Esophagus muscularis mucosa (tissue), 4 donors: ENCODE measurements at regions of chr1 and their contacts with region 1.

Region 1: DNA sequence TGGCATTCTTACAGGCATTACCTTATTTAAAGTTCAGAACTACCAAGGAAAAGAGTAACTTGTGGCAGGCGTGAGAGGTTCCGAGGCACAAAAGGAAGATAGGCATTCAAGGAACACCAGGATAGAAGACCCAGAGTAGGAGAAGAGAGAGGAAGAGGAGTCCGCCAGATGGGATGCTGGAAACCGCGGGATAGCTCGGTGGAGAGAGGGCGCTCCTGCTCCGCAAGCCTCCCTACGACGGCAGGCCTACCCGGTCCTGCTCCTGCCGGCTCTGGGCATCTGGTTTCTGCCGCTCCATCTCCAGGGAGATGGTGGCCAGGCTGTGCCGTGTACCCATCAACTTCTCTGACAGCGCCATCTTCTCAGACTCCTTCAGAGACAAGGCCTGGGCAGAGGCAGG is 5.4 kb upstream of the NBPF1 start:
- DNase-seq: no peak
- H3K4me3 ChIP-seq: no peak overlapping the region
- H3K27ac ChIP-seq: no peak overlapping the region
- H3K4me1 ChIP-seq: peaks cover 3 to 16% (median 9%) of the 10 kb centered on the region in 4 donors
- H3K27me3 ChIP-seq: no peaks in the 10 kb centered on the region
- CTCF ChIP-seq: no peak
- EP300 ChIP-seq: no peak
- POLR2A ChIP-seq: no peak

Region 2: GRCh38 chr1:16478091-16478490 is 140.6 kb before region 1 on chr1:
- intact Hi-C with region 1: no loop called
- DNase-seq: no peak
- H3K4me3 ChIP-seq: no peak overlapping the region
- H3K27ac ChIP-seq: no peak overlapping the region
- H3K4me1 ChIP-seq: no peaks in the 10 kb centered on the region
- H3K27me3 ChIP-seq: no peaks in the 10 kb centered on the region
- CTCF ChIP-seq: no peak
- EP300 ChIP-seq: no peak
- POLR2A ChIP-seq: no peak

Region 3: GRCh38 chr1:16521288-16521583 is 97.5 kb before region 1 on chr1:
- intact Hi-C with region 1: no loop called
- DNase-seq: no peak
- H3K4me3 ChIP-seq: peak overlapping the region in 1 of 4 donors; percentile 34
- H3K27ac ChIP-seq: no peak overlapping the region
- H3K4me1 ChIP-seq: no peaks in the 10 kb centered on the region
- H3K27me3 ChIP-seq: peaks cover 0 to 35% (median 0%) of the 10 kb centered on the region in 4 donors
- CTCF ChIP-seq: no peak
- EP300 ChIP-seq: no peak
- POLR2A ChIP-seq: no peak

Region 4: GRCh38 chr1:16946646-16947045 is 327.9 kb after region 1 on chr1:
- intact Hi-C with region 1: loop called (anchors 2 kb)
- DNase-seq: no peak
- H3K4me3 ChIP-seq: no peak overlapping the region
- H3K27ac ChIP-seq: no peak overlapping the region
- H3K4me1 ChIP-seq: peaks cover 0 to under 1% (median under 1%) of the 10 kb centered on the region in 4 donors
- H3K27me3 ChIP-seq: no peaks in the 10 kb centered on the region
- CTCF ChIP-seq: no peak
- EP300 ChIP-seq: no peak
- POLR2A ChIP-seq: no peak